ENCODE measurements at regions of chr6 and their contacts with region 1.

Region 1: GRCh38 chr6:31769684-31770371 is 7.3 kb downstream of the VWA7 start:
- DNase-seq: peak; percentile 90
- ATAC-seq: peak; percentile 87
- H3K4me3 Mint-ChIP-seq: no peak overlapping the region
- H3K27ac Mint-ChIP-seq: no peak overlapping the region
- H3K4me1 Mint-ChIP-seq: peaks cover 26% of the 10 kb centered on the region
- H3K27me3 Mint-ChIP-seq: no peaks in the 10 kb centered on the region
- CTCF ChIP-seq: peak; percentile 84

Region 2: GRCh38 chr6:31729515-31729978 is 40.3 kb before region 1 on chr6:
- CTCF ChIA-PET with region 1: interaction called, 59 read pairs
- POLR2A ChIA-PET with region 1: interaction called, 3 read pairs
- intact Hi-C with region 1: no loop called
- DNase-seq: peak; percentile 84
- ATAC-seq: peak; percentile 65
- H3K4me3 Mint-ChIP-seq: peak overlapping the region; percentile 76
- H3K27ac Mint-ChIP-seq: peak overlapping the region; percentile 69
- H3K4me1 Mint-ChIP-seq: peaks cover 68% of the 10 kb centered on the region
- H3K27me3 Mint-ChIP-seq: no peaks in the 10 kb centered on the region
- CTCF ChIP-seq: peak; percentile 25

Region 3: DNA sequence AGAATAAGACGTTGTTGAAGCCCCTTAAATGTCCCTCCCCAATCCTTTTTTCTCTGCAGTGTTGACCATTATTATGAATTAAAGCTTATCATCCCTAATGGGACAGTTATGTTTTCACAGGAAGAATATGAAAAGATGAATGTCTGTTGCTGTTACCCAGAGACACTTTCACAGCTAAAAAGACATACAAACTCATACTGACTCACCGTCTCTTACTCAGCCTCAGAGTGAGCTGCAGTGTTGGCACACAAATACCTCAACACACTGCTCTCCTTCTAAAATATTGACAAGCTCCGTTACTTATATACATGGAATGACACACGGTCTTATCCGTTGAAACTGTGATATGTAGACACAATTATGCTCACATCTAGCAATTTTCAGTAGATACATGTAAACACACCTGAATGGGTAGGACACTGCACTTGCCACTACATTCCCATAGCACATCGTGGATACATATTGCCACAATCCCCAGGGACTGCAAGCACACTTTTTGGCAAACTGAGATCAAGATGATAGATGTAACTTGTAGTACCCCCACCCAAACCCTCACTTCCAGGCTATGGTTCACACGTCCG is 17.0 kb before region 1 on chr6:
- CTCF ChIA-PET with region 1: interaction called, 13 read pairs
- POLR2A ChIA-PET with region 1: interaction called, 3 read pairs
- intact Hi-C with region 1: no loop called
- DNase-seq: no peak
- ATAC-seq: no peak
- H3K4me3 Mint-ChIP-seq: no peak overlapping the region
- H3K27ac Mint-ChIP-seq: no peak overlapping the region
- H3K4me1 Mint-ChIP-seq: no peaks in the 10 kb centered on the region
- H3K27me3 Mint-ChIP-seq: no peaks in the 10 kb centered on the region
- CTCF ChIP-seq: no peak

Region 4: DNA sequence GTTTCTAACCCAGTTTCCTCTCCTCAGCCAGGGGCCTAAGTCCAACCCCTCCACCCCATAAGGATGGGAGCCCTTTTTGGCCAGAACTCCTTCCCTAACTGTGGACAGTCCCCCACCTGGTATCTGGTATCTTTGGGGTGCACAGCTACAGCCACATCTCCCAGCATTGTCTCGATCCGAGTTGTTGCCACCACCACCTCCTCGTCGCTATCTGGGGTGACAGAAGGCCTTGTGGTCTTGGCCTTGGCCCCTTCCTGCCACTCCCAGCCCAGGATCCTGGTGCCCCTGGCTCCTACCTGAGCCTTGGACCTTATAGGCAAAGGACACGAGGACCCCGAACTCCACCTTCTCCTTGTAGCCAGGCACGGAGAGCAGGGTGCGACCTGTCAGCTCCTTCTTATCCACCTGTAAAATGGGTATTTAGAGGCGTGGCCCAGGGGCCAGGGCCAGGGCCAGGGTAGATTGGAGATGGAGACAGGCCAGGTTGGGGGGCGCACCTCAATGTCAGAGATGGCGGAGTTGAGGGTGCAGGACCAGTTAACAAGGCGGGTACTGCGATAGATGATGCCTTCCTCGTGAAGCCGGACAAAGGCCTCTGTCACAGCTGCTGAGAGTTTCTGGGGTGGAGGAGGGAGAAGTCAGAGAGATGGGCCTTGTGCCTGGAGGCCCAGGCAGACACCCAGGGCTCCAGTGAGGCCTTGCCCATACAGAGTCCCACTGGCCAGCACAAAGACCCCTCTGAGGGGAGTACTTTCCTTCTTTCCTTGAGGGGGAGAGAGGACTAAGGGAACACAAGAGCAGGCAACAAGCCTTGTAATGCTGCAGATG is 14.5 kb after region 1 on chr6:
- CTCF ChIA-PET with region 1: interaction called, 26 read pairs
- POLR2A ChIA-PET with region 1: interaction called, 5 read pairs
- intact Hi-C with region 1: no loop called
- DNase-seq: no peak
- ATAC-seq: no peak
- H3K4me3 Mint-ChIP-seq: no peak overlapping the region
- H3K27ac Mint-ChIP-seq: no peak overlapping the region
- H3K4me1 Mint-ChIP-seq: no peaks in the 10 kb centered on the region
- H3K27me3 Mint-ChIP-seq: no peaks in the 10 kb centered on the region
- CTCF ChIP-seq: no peak

Region 5: DNA sequence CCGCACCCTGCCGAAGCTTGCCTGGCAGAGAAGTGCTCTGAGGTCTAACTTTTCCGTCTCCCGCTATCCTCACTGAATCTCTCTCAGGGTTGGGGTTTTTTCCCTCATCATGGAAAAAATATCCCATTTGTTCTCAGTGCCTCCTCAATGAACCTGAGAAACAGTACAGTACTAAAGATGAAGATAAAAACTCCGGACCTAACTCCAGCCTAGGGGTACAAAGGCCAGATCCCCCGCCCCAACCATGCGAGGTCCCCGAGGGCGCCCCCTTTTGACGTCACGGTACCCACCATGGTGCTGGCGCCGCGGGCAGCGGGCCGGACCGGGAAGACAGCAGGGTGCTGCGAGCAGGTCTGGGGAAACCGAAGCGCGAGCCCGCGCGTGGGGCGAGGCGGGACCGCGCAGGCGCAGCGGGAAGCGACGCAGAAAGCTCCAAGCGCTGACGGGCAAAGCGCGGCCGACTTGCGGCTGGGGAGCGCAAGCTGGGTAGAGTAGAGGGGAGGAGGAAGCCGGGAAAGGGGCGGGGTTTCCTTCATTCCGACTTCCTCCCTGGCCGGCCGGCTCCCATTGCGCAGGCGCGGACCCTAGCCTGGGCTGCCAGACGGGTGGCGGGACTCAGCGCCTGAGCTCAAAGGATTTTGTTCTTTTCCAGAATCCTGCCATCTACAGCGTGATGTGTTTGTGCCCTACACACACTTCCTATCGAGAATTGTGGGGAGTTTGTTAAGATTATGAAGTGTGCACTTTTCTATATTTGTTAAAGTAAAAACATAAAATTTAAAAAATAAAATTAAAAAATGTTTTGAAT is 36.8 kb after region 1 on chr6 and contains the start of gene LSM2:
- CTCF ChIA-PET with region 1: interaction called, 11 read pairs
- POLR2A ChIA-PET with region 1: no interaction called
- intact Hi-C with region 1: no loop called
- DNase-seq: peak; percentile 98
- ATAC-seq: peak; percentile 98
- H3K4me3 Mint-ChIP-seq: peak within 1 kb of the TSS; percentile 98
- H3K27ac Mint-ChIP-seq: peak within 1 kb of the TSS; percentile 97
- H3K4me1 Mint-ChIP-seq: peaks cover 19% of the 10 kb centered on the region
- H3K27me3 Mint-ChIP-seq: no peaks in the 10 kb centered on the region
- CTCF ChIP-seq: no peak
- total RNA-seq, gene LSM2: 117 to 120 TPM

Region 6: GRCh38 chr6:31940256-31940664 is 170.4 kb after region 1 on chr6:
- CTCF ChIA-PET with region 1: no interaction called
- POLR2A ChIA-PET with region 1: no interaction called
- intact Hi-C with region 1: no loop called
- DNase-seq: no peak
- ATAC-seq: no peak
- H3K4me3 Mint-ChIP-seq: no peak overlapping the region
- H3K27ac Mint-ChIP-seq: no peak overlapping the region
- H3K4me1 Mint-ChIP-seq: no peaks in the 10 kb centered on the region
- H3K27me3 Mint-ChIP-seq: peaks cover 8% of the 10 kb centered on the region
- CTCF ChIP-seq: no peak

Region 7: GRCh38 chr6:32267035-32267434 is 497.2 kb after region 1 on chr6:
- CTCF ChIA-PET with region 1: no interaction called
- POLR2A ChIA-PET with region 1: no interaction called
- intact Hi-C with region 1: no loop called
- DNase-seq: no peak
- ATAC-seq: no peak
- H3K4me3 Mint-ChIP-seq: no peak overlapping the region
- H3K27ac Mint-ChIP-seq: no peak overlapping the region
- H3K4me1 Mint-ChIP-seq: peaks cover 10% of the 10 kb centered on the region
- H3K27me3 Mint-ChIP-seq: peaks cover 3% of the 10 kb centered on the region
- CTCF ChIP-seq: no peak